Caco-2 (cell line): ENCODE measurements at regions of chr18 and their contacts with region 1.

Region 1: GRCh38 chr18:27400001-27400400 is 214.9 kb upstream of the CHST9 start:
- DNase-seq: peak in 1 of 2 experiments; percentile 3
- H3K4me3 ChIP-seq: no peak overlapping the region
- H3K4me3 Mint-ChIP-seq: no peak overlapping the region
- H3K27ac Mint-ChIP-seq: no peak overlapping the region
- H3K4me1 ChIP-seq: no peaks in the 10 kb centered on the region
- H3K4me1 Mint-ChIP-seq: no peaks in the 10 kb centered on the region
- H3K27me3 ChIP-seq: no peaks in the 10 kb centered on the region
- H3K27me3 Mint-ChIP-seq: no peaks in the 10 kb centered on the region
- CTCF ChIP-seq: no peak

Region 2: GRCh38 chr18:27363872-27364271 is 36.1 kb before region 1 on chr18:
- CTCF ChIA-PET with region 1: no interaction called
- POLR2A ChIA-PET with region 1: no interaction called
- intact Hi-C with region 1: no loop called
- DNase-seq: peak in 1 of 2 experiments; percentile 1
- H3K4me3 ChIP-seq: no peak overlapping the region
- H3K4me3 Mint-ChIP-seq: no peak overlapping the region
- H3K27ac Mint-ChIP-seq: no peak overlapping the region
- H3K4me1 ChIP-seq: no peaks in the 10 kb centered on the region
- H3K4me1 Mint-ChIP-seq: no peaks in the 10 kb centered on the region
- H3K27me3 ChIP-seq: no peaks in the 10 kb centered on the region
- H3K27me3 Mint-ChIP-seq: peaks cover 3% of the 10 kb centered on the region
- CTCF ChIP-seq: peak in 1 of 2 experiments; percentile 14

Region 3: GRCh38 chr18:27428120-27428519 is 28.1 kb after region 1 on chr18:
- CTCF ChIA-PET with region 1: no interaction called
- POLR2A ChIA-PET with region 1: no interaction called
- intact Hi-C with region 1: loop called (anchors 1 kb)
- DNase-seq: no peak
- H3K4me3 ChIP-seq: no peak overlapping the region
- H3K4me3 Mint-ChIP-seq: no peak overlapping the region
- H3K27ac Mint-ChIP-seq: no peak overlapping the region
- H3K4me1 ChIP-seq: peaks cover 7% of the 10 kb centered on the region; the same call in 1 of the 2 replicates
- H3K4me1 Mint-ChIP-seq: no peaks in the 10 kb centered on the region
- H3K27me3 ChIP-seq: no peaks in the 10 kb centered on the region
- H3K27me3 Mint-ChIP-seq: no peaks in the 10 kb centered on the region
- CTCF ChIP-seq: no peak

Region 4: GRCh38 chr18:27636576-27637085 is 236.6 kb after region 1 on chr18:
- CTCF ChIA-PET with region 1: no interaction called
- POLR2A ChIA-PET with region 1: no interaction called
- intact Hi-C with region 1: no loop called
- DNase-seq: no peak
- H3K4me3 ChIP-seq: no peak overlapping the region
- H3K4me3 Mint-ChIP-seq: no peak overlapping the region
- H3K27ac Mint-ChIP-seq: no peak overlapping the region
- H3K4me1 ChIP-seq: no peaks in the 10 kb centered on the region
- H3K4me1 Mint-ChIP-seq: no peaks in the 10 kb centered on the region
- H3K27me3 ChIP-seq: no peaks in the 10 kb centered on the region
- H3K27me3 Mint-ChIP-seq: no peaks in the 10 kb centered on the region
- CTCF ChIP-seq: no peak

Region 5: DNA sequence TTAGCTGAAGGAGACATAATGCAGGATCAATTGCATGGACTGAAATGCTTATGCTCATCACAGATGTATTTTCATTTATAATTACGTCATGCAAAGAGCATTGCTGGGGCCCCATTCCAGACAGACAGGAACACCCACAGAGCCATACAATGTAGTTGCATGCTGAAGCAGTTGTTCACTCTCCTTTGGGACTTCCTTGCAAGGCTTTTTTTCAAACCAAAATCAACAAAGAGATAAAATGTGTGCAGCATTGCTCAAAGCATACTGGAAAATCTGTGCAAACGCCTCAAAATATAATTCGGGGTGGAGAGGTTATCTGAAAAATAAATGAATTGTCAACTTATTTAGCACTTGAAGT is 313.7 kb after region 1 on chr18:
- CTCF ChIA-PET with region 1: no interaction called
- POLR2A ChIA-PET with region 1: no interaction called
- intact Hi-C with region 1: no loop called
- DNase-seq: no peak
- H3K4me3 ChIP-seq: no peak overlapping the region
- H3K4me3 Mint-ChIP-seq: no peak overlapping the region
- H3K27ac Mint-ChIP-seq: no peak overlapping the region
- H3K4me1 ChIP-seq: no peaks in the 10 kb centered on the region
- H3K4me1 Mint-ChIP-seq: no peaks in the 10 kb centered on the region
- H3K27me3 ChIP-seq: no peaks in the 10 kb centered on the region
- H3K27me3 Mint-ChIP-seq: no peaks in the 10 kb centered on the region
- CTCF ChIP-seq: no peak